BJ (cell line): ENCODE measurements at regions of chr15 and their contacts with region 1.

Region 1: DNA sequence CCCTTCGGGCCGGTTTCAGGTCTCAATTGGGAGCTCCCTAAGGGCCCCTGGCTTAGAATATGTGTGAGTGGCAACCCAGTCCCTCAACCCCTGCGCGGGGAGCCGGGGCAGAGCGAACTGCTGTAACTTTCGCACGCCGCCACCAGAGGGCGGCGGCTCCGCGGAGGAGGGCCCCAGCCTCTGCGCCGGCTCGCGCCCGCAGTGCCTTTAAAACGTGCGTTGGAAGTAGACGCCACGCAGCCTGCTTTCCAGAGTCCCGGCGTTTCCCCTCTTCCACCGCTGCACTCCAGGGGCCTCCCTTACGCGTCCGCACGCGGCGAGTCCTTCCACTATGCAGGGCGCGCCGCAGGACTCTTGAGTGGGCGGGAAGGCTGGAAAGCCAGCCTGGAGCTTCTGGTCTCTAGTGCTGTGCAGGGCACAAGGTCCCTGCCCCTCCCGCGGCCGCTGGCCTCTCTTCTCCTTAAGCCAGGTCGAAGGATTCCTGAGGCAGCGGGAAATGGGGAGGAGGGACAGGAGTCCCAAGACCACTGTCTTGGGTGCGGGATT is 23.7 kb upstream of the RNU6-1 start:
- DNase-seq: no peak
- H3K4me3 ChIP-seq: peak overlapping the region; percentile 27
- H3K27me3 ChIP-seq: no peaks in the 10 kb centered on the region
- CTCF ChIP-seq: peak; percentile 94

Region 2: DNA sequence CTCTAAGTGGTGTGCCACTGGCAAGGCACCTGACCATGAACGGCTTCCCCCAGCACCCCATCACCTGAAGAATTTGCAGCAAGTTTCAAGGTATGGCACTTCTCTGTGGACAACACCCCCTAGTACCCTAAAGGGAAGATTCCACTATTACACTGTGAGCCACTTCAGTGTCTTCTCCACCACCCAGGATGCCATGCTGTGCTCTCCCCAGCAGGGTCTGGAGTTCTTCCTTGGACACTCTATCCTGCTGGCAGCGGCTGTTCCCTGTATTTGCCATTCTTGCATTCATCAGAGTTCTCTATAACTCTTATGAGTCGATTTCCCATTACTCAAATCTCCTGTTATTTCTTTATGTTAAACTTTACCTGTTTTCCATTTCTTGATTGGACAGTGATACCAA is 10.3 kb after region 1 on chr15:
- CTCF ChIA-PET with region 1: interaction called, 16 read pairs
- POLR2A ChIA-PET with region 1: no interaction called
- DNase-seq: no peak
- H3K4me3 ChIP-seq: no peak overlapping the region
- H3K27me3 ChIP-seq: no peaks in the 10 kb centered on the region
- CTCF ChIP-seq: no peak

Region 3: DNA sequence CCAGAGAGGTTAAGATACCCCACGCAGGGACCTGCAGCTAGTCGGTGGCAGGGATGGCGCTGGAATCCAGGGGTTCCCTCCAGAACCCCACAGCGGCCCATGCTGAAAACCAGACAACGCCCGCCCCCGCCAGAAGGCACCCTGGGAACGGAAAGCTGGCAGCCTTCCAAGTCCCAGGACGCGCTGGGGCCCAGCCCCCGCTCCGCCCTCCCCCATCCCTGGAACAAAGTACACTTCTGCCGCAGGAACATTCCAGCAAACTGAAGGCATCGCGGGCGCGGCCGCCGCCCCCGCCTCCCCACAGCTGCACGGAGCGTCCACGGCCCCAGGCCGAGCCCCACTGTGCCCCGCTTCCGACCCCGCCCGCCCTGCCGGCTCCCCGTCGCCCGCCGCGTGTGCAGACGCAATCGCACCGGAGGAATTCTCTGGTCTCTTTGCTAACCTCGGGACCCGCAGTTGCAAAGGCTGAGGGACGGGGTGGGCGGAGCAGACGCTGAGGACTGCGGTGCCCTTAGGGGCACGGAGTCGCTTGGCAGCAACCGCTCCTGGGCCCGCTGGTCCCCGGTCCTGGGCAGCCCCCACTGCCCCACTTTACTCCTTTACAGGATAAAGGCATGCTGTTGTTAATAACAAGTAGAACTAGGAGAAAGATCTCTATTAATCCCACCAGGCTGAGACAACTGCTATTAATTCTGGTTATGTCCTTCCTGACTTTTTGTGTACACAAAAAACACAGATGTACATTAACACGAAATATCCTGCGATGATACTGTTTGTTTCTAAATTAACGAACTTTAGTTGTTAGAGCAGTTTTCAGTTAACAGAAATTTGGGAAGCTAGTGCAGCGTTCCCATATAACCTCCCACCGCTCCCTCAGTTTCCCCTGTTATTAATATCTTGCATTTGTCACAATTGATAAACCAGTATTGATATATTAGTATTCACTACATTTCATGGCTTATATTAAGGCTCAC is 21.3 kb after region 1 on chr15:
- CTCF ChIA-PET with region 1: interaction called, 11 read pairs
- POLR2A ChIA-PET with region 1: no interaction called
- DNase-seq: peak; percentile 16
- H3K4me3 ChIP-seq: peak overlapping the region; percentile 28
- H3K27me3 ChIP-seq: peaks cover 4% of the 10 kb centered on the region; the same call in 1 of the 2 replicates
- CTCF ChIP-seq: no peak

Region 4: GRCh38 chr15:68054628-68055223 is 191.2 kb after region 1 on chr15:
- CTCF ChIA-PET with region 1: interaction called, 14 read pairs
- POLR2A ChIA-PET with region 1: interaction called, 3 read pairs
- DNase-seq: no peak
- H3K4me3 ChIP-seq: peak overlapping the region; percentile 72
- H3K27me3 ChIP-seq: no peaks in the 10 kb centered on the region
- CTCF ChIP-seq: no peak

Region 5: GRCh38 chr15:68154923-68155559 is 291.5 kb after region 1 on chr15:
- CTCF ChIA-PET with region 1: interaction called, 50 read pairs
- POLR2A ChIA-PET with region 1: no interaction called
- DNase-seq: no peak
- H3K4me3 ChIP-seq: no peak overlapping the region
- H3K27me3 ChIP-seq: no peaks in the 10 kb centered on the region
- CTCF ChIP-seq: peak; percentile 78

Region 6: DNA sequence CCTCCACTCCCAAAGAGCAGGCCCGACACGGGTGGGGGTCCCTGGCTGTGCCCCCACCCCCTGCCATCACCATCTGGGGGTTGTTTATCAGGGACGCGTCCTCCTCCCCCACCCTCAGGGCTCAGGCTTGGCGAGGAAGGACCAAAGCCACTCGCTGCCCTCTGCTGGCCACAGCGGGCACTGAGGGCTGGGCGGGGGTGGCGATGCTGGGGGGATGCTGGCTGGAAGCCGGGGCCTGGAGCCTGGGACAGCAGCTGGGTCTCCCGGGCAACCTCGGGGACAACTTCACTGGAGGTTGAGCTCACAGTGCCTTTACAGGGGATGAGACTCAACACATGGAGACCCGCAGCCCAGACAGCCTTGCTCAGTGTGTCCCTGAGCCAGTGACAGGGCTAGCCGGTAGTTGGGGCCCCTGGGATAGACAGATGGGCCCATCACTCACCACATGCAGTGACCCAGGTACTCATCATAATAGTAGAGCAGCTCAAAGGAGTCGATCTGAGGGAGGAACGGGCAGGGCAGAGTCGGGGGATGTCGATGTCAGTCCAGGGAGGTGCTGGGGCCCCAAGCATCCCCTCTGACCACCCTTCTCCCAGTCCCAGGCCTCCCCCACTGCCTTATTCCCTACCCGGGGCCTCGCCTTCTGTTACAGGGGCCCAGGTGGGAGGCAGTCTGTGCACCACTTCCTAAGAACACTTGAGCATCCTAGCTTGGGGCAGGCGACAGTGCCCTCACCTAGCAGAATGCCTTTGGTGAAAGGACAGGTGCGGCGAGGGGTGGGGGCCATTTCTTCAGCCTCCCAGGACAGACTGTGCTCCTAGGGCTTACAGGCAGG is 347.5 kb after region 1 on chr15:
- CTCF ChIA-PET with region 1: interaction called, 12 read pairs
- POLR2A ChIA-PET with region 1: no interaction called
- DNase-seq: no peak
- H3K4me3 ChIP-seq: peak overlapping the region; percentile 24
- H3K27me3 ChIP-seq: no peaks in the 10 kb centered on the region
- CTCF ChIP-seq: peak; percentile 99

Region 7: DNA sequence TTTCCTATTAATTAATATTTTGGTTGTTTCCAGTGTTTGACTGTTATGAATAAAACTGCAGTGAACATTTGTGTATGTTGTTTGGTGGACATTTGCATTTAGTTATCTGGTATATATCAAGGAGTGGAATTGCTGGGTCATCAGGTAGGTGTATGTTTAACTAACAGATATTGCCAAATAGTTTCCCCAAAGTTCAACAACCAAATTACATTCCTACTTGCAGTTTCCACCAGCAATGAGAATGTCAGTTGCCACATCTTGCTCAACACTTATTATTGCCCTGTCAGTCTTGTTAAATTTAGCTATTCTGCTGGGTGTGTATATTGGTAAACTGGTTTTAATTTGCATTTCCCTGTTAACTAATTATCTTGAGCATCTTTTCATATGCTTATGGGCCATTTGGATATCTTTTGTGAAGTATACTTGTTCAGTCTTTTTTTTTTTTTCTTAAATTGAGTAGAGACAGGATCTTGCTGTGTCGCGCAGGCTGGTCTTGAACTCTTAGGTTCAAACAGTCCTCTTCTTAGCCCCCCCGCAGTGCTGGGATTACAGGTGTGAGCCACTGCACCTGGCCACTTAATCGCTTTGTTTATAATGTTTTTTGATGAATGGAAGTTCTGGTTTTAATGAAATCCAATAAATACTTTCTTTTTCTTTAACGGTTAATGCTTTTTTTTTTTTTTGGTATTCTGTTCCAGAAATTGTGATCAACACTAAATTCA is 421.9 kb after region 1 on chr15:
- CTCF ChIA-PET with region 1: no interaction called
- POLR2A ChIA-PET with region 1: no interaction called
- DNase-seq: no peak
- H3K4me3 ChIP-seq: no peak overlapping the region
- H3K27me3 ChIP-seq: no peaks in the 10 kb centered on the region
- CTCF ChIP-seq: no peak